RWPE1 (cell line): ENCODE measurements at regions of chr17 and their contacts with region 1.

Region 1: GRCh38 chr17:29640413-29640812 is 17.7 kb upstream of the CORO6 start:
- DNase-seq: no peak
- H3K27ac ChIP-seq: peak overlapping the region; percentile 89
- CTCF ChIP-seq: no peak

Region 2: DNA sequence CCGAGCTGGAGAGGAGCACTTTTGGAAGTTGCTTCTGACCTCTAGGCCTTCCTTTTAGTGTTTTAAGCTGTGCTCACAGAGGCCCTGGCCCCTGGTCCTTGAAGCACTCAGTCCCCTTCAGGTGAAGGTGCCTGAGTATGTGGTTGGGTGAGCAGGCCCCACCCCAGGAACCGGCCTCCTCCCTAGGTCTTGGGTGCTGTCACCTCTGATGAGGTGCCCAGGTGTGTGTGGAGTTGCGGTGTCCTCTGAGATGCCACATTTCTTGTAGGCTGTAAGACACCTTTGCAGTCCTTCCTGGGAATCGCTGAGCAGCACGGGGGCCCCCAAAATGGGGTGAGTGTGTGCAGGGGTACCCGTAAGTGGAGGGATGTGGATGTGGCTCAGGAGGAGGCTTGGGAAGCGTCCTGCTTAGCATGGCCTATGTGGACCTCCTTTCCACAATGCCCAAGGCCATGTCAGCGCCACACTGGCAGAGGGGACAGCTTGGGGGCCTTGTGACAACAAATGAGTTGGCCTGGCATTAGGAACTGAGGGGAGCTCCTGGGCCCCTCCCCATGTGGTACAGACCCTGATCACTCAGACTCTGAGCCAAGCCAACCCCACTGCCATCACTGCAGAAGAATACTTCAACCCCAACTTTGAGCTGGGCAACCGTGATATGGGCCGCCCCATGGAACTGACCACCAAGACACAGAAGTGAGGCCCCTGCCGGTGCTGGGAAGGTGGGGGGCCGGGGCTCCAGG is 28.9 kb before region 1 on chr17:
- CTCF ChIA-PET with region 1: no interaction called
- POLR2A ChIA-PET with region 1: no interaction called
- DNase-seq: no peak
- H3K27ac ChIP-seq: peak overlapping the region; percentile 34
- CTCF ChIP-seq: no peak

Region 3: DNA sequence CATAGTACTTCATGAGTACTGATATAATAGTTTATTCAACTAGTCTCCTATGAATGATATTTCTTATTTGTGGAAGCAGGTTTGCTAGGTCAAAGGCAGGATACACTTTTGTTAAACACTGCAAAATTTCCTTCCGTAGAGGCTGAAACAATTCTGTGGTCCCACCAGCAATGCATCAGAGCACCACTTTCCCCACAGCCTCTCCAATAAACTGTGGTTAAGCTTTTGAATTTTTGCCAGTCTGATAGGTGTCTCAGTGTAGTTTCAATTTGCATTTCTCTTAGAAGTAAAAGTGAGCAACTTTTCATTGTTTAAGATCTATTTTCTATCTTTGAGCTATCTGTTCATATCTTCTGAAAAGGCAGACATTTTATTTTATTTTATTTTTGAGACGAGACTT is 18.7 kb after region 1 on chr17:
- CTCF ChIA-PET with region 1: no interaction called
- POLR2A ChIA-PET with region 1: no interaction called
- DNase-seq: no peak
- H3K27ac ChIP-seq: no peak overlapping the region
- CTCF ChIP-seq: no peak

Region 4: GRCh38 chr17:29699283-29699682 is 58.9 kb after region 1 on chr17:
- CTCF ChIA-PET with region 1: no interaction called
- POLR2A ChIA-PET with region 1: no interaction called
- DNase-seq: no peak
- H3K27ac ChIP-seq: no peak overlapping the region
- CTCF ChIP-seq: no peak

Region 5: GRCh38 chr17:29734640-29735039 is 94.2 kb after region 1 on chr17:
- CTCF ChIA-PET with region 1: interaction called, 10 read pairs
- POLR2A ChIA-PET with region 1: no interaction called
- DNase-seq: no peak
- H3K27ac ChIP-seq: no peak overlapping the region
- CTCF ChIP-seq: no peak

Region 6: GRCh38 chr17:29777663-29778062 is 137.2 kb after region 1 on chr17:
- CTCF ChIA-PET with region 1: interaction called, 24 read pairs
- POLR2A ChIA-PET with region 1: no interaction called
- DNase-seq: no peak
- H3K27ac ChIP-seq: no peak overlapping the region
- CTCF ChIP-seq: no peak

Region 7: GRCh38 chr17:29835435-29836351 is 195.3 kb after region 1 on chr17:
- CTCF ChIA-PET with region 1: no interaction called
- POLR2A ChIA-PET with region 1: no interaction called
- DNase-seq: no peak
- H3K27ac ChIP-seq: no peak overlapping the region
- CTCF ChIP-seq: no peak

Region 8: GRCh38 chr17:29931231-29931932 is 291.0 kb after region 1 on chr17:
- CTCF ChIA-PET with region 1: interaction called, 11 read pairs
- POLR2A ChIA-PET with region 1: no interaction called
- DNase-seq: peak; percentile 54
- H3K27ac ChIP-seq: no peak overlapping the region
- CTCF ChIP-seq: peak; percentile 93